ENCODE measurements at regions of chr12 and their contacts with region 1.

Region 1: DNA sequence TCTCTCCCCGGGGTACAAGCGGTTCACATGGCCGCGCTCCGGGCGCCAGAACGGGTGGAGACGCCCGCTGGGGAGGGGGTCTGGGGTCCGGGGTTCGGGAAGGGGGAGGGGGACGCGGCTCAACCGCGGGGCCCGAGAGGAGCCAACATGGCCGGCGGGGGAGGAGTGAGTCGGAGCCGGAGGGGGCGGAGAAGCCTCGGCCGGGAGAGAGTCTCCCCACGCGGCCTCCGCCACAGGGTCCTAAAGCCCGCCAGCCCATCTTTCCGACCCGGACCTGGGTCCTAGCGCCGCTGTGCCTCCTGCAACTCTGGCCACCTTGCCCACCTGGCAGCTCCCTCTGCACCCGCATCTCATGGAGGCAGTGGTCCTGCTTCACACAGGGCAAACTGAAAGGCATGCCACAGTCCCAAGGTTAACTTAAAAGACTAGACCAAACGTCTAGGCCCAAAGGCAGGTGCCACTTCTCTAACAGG is at the start of gene BAZ2A:
- DNase-seq: peak; percentile 89 to 98 (median 96)
- H3K4me3 ChIP-seq: peak within 1 kb of the TSS; percentile 57 to 100 (median 96)
- H3K27ac ChIP-seq: peak within 1 kb of the TSS; percentile 72 to 99 (median 94)
- H3K27me3 ChIP-seq: no peaks in the 10 kb centered on the region
- CTCF ChIP-seq: peak in 27 of 56 donors; percentile 4 to 45 (median 22)
- total RNA-seq, gene BAZ2A: 58.5 to 126 (median 86.8) TPM

Region 2: DNA sequence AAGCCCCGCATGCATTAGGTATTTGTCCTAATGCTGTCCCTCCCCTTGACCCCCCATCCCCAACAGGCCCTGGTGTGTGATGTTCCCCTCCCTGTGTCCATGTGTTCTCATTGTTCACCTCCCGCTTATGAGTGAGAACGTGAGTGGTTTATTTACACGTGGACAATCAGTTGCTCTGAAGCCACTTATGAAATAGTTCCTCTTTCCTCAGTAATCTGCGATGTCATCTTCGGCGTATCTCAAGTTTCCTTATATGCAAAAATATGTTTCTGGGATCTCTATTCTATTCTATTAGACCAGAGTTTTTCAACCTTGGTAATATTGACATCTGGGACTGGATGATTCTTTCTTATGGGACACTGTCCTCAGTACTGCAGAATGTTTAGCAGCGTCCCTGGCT is 1926.0 kb before region 1 on chr12:
- intact Hi-C with region 1: no loop called
- DNase-seq: no peak
- H3K4me3 ChIP-seq: no peak overlapping the region
- H3K27ac ChIP-seq: no peak overlapping the region
- H3K27me3 ChIP-seq: no peaks in the 10 kb centered on the region
- CTCF ChIP-seq: no peak

Region 3: GRCh38 chr12:55973598-55974307 is 656.4 kb before region 1 on chr12 and contains the start of gene RAB5B:
- intact Hi-C with region 1: no loop called
- DNase-seq: peak; percentile 97 to 100 (median 100)
- H3K4me3 ChIP-seq: peak within 1 kb of the TSS; percentile 70 to 100 (median 98)
- H3K27ac ChIP-seq: peak within 1 kb of the TSS; percentile 60 to 98 (median 93)
- H3K27me3 ChIP-seq: no peaks in the 10 kb centered on the region
- CTCF ChIP-seq: peak in 45 of 56 donors; percentile 15 to 77 (median 40)
- total RNA-seq, gene RAB5B: 148 to 223 (median 185) TPM

Region 4: GRCh38 chr12:56593909-56594621 is 36.1 kb before region 1 on chr12:
- intact Hi-C with region 1: loop called in 1 of 2 experiments (anchors 5 kb)
- DNase-seq: peak in 6 of 10 donors; percentile 18 to 58 (median 49)
- H3K4me3 ChIP-seq: no peak overlapping the region
- H3K27ac ChIP-seq: peak overlapping the region in 55 of 59 donors; percentile 12 to 93 (median 62)
- H3K27me3 ChIP-seq: no peaks in the 10 kb centered on the region
- CTCF ChIP-seq: peak; percentile 23 to 76 (median 68)

Region 5: GRCh38 chr12:56785141-56785865 is 155.1 kb after region 1 on chr12:
- intact Hi-C with region 1: no loop called
- DNase-seq: no peak
- H3K4me3 ChIP-seq: no peak overlapping the region
- H3K27ac ChIP-seq: no peak overlapping the region
- H3K27me3 ChIP-seq: no peaks in the 10 kb centered on the region
- CTCF ChIP-seq: no peak

Region 6: GRCh38 chr12:56873382-56873781 is 243.2 kb after region 1 on chr12:
- intact Hi-C with region 1: no loop called
- DNase-seq: no peak
- H3K4me3 ChIP-seq: no peak overlapping the region
- H3K27ac ChIP-seq: no peak overlapping the region
- H3K27me3 ChIP-seq: no peaks in the 10 kb centered on the region
- CTCF ChIP-seq: no peak

Measured in dorsolateral prefrontal cortex (tissue), 120 donors.